ENCODE measurements at regions of chr7 and their contacts with region 1.

Region 1: GRCh38 chr7:140479062-140479738 is at the start of gene MKRN1:
- DNase-seq: peak; percentile 94
- H3K4me3 Mint-ChIP-seq: peak within 1 kb of the TSS; percentile 95
- H3K27ac Mint-ChIP-seq: peak within 1 kb of the TSS; percentile 91
- H3K4me1 Mint-ChIP-seq: peaks cover 29% of the 10 kb centered on the region
- H3K27me3 Mint-ChIP-seq: no peaks in the 10 kb centered on the region
- total RNA-seq, gene MKRN1: 77.6 to 78.6 TPM

Region 2: GRCh38 chr7:139635526-139636302 is 843.5 kb before region 1 on chr7:
- CTCF ChIA-PET with region 1: no interaction called
- intact Hi-C with region 1: loop called (anchors 5 kb)
- DNase-seq: peak; percentile 85
- H3K4me3 Mint-ChIP-seq: peak overlapping the region; percentile 72
- H3K27ac Mint-ChIP-seq: peak overlapping the region; percentile 77
- H3K4me1 Mint-ChIP-seq: peaks cover 61% of the 10 kb centered on the region
- H3K27me3 Mint-ChIP-seq: no peaks in the 10 kb centered on the region

Region 3: GRCh38 chr7:140062528-140063299 is 416.5 kb before region 1 on chr7 and contains the start of gene PARP12:
- CTCF ChIA-PET with region 1: no interaction called
- intact Hi-C with region 1: loop called (anchors 1 kb)
- DNase-seq: peak; percentile 76
- H3K4me3 Mint-ChIP-seq: peak within 1 kb of the TSS; percentile 81
- H3K27ac Mint-ChIP-seq: no peak within 1 kb of the TSS
- H3K4me1 Mint-ChIP-seq: peaks cover 35% of the 10 kb centered on the region
- H3K27me3 Mint-ChIP-seq: no peaks in the 10 kb centered on the region
- total RNA-seq, gene PARP12: 25.2 to 25.3 TPM

Region 4: DNA sequence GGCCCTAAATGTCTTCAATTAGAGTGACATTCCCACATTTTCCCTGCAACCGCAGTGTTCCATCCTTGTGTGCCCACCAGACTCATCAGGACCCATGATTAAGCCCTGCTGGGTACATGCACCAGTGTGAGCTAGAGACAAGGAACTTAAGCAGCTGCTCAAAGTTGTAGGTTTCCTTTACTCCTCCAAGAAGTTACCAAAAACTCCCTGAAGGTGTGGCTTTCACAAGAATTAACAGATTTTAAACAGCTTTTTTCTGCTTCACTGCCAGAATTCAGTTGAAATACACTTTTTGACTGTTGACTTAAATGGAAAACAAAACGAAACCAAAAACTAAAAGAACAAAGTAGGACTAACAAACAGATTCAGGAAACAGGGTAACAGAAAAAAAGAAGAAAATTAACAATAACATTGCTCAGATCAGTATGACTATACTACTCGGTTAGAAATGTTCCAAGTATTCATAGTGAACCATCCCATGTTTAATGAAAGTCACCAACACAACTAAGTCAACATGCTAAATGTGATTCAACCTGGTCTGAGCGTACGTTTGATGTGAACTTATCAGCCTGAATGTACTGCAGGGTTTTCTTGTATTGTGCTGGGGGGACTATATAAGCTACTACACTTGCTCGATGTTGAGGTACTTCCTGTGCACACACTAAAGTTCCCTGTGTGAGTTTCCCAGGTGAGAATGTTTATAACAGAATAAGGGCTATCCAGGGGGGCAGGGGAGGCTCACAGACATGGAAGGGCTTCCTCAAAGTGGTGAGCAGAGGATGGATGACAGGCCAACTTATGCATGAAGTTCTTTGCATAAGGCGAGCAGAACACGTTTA is 103.1 kb before region 1 on chr7:
- CTCF ChIA-PET with region 1: interaction called, 11 read pairs
- intact Hi-C with region 1: loop called (anchors 1 kb)
- DNase-seq: peak; percentile 59
- H3K4me3 Mint-ChIP-seq: peak overlapping the region; percentile 58
- H3K27ac Mint-ChIP-seq: peak overlapping the region; percentile 96
- H3K4me1 Mint-ChIP-seq: peaks cover 37% of the 10 kb centered on the region
- H3K27me3 Mint-ChIP-seq: no peaks in the 10 kb centered on the region

Region 5: DNA sequence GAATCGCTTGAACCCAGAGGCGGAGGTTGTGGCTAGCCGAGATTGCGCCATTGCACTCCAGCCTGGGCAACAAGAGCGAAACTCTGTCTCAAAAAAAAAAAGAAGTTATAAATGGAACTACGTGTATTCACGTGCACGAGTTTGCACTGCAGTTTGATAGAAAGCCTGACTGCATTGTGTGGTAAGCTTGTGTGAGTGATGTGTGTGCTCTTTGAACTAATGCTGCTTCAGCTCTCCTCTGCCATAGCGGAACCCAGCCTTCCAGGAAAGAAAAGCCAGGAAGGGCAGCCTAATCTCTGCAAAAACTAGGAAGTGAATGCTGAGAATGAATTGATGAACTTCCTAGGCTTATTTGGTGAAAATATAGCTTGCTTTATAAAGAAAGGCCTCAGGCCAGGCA is 15.7 kb after region 1 on chr7:
- CTCF ChIA-PET with region 1: interaction called, 30 read pairs
- intact Hi-C with region 1: loop called (anchors 1 kb)
- DNase-seq: no peak
- H3K4me3 Mint-ChIP-seq: no peak overlapping the region
- H3K27ac Mint-ChIP-seq: no peak overlapping the region
- H3K4me1 Mint-ChIP-seq: no peaks in the 10 kb centered on the region
- H3K27me3 Mint-ChIP-seq: no peaks in the 10 kb centered on the region

Region 6: DNA sequence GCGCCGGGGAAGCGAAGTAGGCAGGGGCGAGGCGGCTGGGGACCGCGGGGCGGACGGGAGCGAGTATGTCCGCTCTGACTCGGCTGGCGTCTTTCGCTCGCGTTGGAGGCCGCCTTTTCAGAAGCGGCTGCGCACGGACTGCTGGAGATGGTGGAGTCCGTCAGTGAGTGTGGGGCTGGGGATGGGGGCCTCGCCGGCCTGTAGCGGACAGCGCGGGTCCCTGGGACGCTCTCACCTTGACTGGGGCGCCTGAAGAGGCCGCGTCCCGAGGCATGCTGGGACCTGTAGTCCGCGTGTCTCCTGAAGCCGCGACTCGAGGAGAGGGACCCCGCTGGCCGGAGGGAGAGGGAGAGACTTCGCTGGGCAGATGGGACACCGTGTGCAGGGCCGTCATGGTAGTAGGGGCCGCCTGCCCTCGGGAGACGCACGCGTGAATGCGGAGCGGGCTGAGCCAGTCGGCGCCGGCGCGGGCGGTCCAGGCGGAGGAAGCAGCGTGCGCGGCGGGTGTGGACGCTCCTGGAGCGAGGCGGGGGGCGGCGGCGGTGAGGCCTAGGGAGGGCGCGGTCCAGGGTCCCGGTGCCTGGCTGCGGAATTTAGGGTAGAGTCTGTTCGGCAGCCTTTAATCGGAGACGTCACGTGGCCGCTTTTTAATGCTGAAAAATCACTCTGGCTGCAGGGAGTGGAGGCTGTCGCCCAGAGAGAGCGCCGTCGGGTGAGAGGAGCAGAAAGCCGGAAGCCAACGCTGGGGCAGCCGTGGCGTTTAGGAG is 217.7 kb after region 1 on chr7 and contains the start of gene NDUFB2:
- CTCF ChIA-PET with region 1: no interaction called
- intact Hi-C with region 1: loop called (anchors 1 kb)
- DNase-seq: peak; percentile 75
- H3K4me3 Mint-ChIP-seq: peak within 1 kb of the TSS; percentile 98
- H3K27ac Mint-ChIP-seq: peak within 1 kb of the TSS; percentile 99
- H3K4me1 Mint-ChIP-seq: peaks cover 34% of the 10 kb centered on the region
- H3K27me3 Mint-ChIP-seq: no peaks in the 10 kb centered on the region
- total RNA-seq, gene NDUFB2: 167 to 179 TPM

Measured in activated naive CD4-positive, alpha-beta T cell treated with anti-CD3 and anti-CD28 coated beads for 36 hours (primary cell).